CD4-positive, alpha-beta T cell (primary cell): ENCODE measurements at regions of chr2 and their contacts with region 1.

Region 1: GRCh38 chr2:180970016-180970415 is 10.4 kb upstream of the UBE2E3 start:
- DNase-seq: no peak
- ATAC-seq: no peak
- H3K4me3 ChIP-seq: no peak overlapping the region
- H3K4me3 Mint-ChIP-seq: no peak overlapping the region
- H3K27ac ChIP-seq: no peak overlapping the region
- H3K27ac Mint-ChIP-seq: no peak overlapping the region
- H3K4me1 ChIP-seq: no peaks in the 10 kb centered on the region
- H3K4me1 Mint-ChIP-seq: no peaks in the 10 kb centered on the region
- H3K27me3 ChIP-seq: peaks cover 0 to 3% of the 10 kb centered on the region in 2 experiments
- H3K27me3 Mint-ChIP-seq: peaks cover 16% of the 10 kb centered on the region
- CTCF ChIP-seq: no peak

Region 2: GRCh38 chr2:180012523-180012922 is 957.5 kb before region 1 on chr2:
- CTCF ChIA-PET with region 1: no interaction called
- POLR2A ChIA-PET with region 1: no interaction called
- intact Hi-C with region 1: loop called in 1 of 2 experiments (anchors 5 kb)
- DNase-seq: no peak
- ATAC-seq: no peak
- H3K4me3 ChIP-seq: no peak overlapping the region
- H3K4me3 Mint-ChIP-seq: no peak overlapping the region
- H3K27ac ChIP-seq: no peak overlapping the region
- H3K27ac Mint-ChIP-seq: no peak overlapping the region
- H3K4me1 ChIP-seq: no peaks in the 10 kb centered on the region
- H3K4me1 Mint-ChIP-seq: no peaks in the 10 kb centered on the region
- H3K27me3 ChIP-seq: peaks cover 0 to under 1% of the 10 kb centered on the region in 2 experiments
- H3K27me3 Mint-ChIP-seq: peaks cover 22% of the 10 kb centered on the region
- CTCF ChIP-seq: no peak